Left lung (tissue), 14 donors: ENCODE measurements at regions of chr16 and their contacts with region 1.

Region 1: DNA sequence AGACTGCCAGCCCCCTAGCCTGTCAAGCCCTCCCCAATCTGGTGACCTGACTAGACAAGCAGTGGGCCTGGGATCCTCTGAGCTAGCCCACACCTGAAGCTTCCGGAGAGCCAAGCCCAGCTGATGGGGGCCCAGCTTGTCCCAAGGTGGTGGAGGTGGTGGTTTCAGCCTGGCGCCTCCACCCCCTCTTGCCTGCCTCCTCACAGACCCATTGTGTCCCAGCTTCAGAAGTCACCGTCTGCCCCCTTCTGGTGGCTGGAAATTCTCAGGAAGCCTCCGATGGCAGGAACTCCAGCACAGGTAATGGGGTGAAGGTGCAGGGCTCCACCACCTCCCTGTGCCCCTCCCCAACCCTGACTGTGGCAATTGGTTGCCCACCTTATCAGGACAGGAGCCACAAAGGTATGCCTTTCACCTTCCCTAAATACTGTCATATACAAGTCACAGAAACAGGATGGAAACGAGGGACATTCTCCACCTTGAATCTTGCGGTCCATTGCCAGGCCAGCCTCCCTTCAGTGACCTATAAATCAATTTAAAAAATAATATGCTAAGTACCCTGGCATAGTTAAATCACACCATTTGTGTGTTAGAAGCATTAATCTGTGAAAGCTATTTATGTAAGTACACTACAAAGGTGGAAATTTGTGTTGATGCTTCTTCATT is 66.0 kb upstream of the ZNF423 start:
- DNase-seq: peak in 3 of 4 donors; percentile 50 to 79 (median 63)
- ATAC-seq: peak; percentile 90
- H3K4me3 ChIP-seq: no peak overlapping the region
- H3K27ac ChIP-seq: no peak overlapping the region
- H3K4me1 ChIP-seq: no peaks in the 10 kb centered on the region
- H3K27me3 ChIP-seq: no peaks in the 10 kb centered on the region
- CTCF ChIP-seq: peak; percentile 39 to 51

Region 2: DNA sequence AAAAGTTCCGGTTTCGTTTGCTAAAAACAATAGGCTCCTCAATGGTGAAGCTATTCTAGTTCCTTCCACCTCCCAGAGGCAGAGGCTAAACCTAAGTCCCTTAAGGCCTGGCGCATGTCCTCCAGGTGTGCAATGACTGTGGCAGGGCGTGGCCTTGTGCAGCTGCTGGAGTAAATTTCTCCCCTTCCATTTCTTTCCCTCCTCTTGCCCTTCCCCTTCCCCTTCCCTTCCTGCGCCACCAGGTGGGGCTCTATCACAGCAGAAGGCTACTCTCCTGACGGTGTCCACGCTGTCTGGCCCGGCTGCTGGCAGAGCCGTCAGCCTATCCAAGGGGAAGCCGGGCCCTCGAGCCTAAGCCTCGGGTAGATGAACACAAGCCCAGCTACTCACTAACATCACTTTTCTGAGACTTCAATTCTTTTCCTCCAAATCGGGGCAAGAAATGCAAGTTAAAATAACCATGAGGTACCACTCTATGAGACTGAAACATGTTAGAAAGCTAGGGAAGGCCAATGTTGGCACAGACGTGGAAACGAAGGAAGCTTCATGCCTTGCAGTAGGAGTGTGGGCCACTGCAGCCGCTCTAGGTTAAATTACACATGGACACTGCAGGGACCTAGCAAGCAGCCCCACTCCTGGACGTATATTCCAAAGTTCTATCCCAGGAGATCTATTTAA is 513.9 kb before region 1 on chr16:
- intact Hi-C with region 1: loop called in 1 of 2 experiments (anchors 5 kb)
- DNase-seq: peak; percentile 76 to 92 (median 86)
- ATAC-seq: peak; percentile 100
- H3K4me3 ChIP-seq: no peak overlapping the region
- H3K27ac ChIP-seq: no peak overlapping the region
- H3K4me1 ChIP-seq: no peaks in the 10 kb centered on the region
- H3K27me3 ChIP-seq: no peaks in the 10 kb centered on the region
- CTCF ChIP-seq: peak; percentile 84

Region 3: DNA sequence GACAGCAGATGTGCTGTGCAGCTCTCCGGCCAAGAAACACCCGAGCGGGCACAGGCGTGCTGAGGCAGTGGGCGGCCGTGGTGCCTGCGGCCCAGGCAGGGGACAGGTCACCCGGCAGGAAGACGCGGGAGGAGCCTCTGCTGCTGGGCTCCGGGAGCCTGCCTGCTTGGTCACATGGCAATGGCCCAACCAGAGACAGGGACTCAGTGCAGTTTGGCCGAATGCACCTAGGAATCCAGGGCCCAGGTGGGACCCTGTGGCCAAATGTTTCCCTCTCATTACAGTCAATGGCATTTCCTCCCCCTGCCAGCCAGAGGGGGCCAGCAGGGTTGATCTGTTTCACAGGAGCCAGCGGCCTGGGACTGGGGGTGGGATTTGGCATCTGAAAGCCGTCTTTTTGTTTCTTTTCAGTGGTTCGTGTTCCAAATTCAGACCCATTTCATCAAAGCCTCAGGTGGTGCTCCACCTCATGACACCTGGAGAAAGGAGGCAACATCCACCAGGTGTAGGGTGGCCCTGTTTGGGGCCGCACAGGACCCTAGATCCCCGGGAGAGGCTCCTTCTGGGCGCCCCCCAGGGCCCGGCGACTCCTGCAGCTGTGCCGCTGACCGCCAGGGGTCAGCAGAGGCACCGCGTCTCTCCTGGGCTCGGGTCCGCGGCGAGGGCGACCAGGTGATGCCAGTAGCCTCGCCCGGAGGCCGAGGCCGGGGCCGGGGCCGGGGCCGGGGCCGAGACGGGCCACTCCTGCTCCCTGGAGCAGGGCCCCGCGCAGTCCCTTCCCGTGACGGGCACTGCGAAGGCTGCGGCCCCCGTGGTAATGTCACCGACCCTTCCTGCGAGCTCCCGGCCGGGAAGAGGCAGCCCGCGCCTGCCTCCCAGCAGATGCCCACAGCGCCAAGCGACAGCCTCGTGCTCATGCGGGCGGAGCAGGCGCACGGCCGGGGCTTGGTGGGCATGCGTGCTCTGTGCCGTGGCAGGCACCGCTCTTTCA is 429.9 kb before region 1 on chr16:
- intact Hi-C with region 1: loop called in 1 of 2 experiments (anchors 10 kb)
- DNase-seq: peak; percentile 28 to 84 (median 44)
- ATAC-seq: peak; percentile 91
- H3K4me3 ChIP-seq: peak overlapping the region; percentile 5 to 9
- H3K27ac ChIP-seq: no peak overlapping the region
- H3K4me1 ChIP-seq: peaks cover 6 to 11% of the 10 kb centered on the region in 2 donors
- H3K27me3 ChIP-seq: peaks cover 0 to 12% of the 10 kb centered on the region in 2 donors
- CTCF ChIP-seq: peak; percentile 90 to 96